CD14-positive monocyte (primary cell): ENCODE measurements at regions of chr21 and their contacts with region 1.

Region 1: DNA sequence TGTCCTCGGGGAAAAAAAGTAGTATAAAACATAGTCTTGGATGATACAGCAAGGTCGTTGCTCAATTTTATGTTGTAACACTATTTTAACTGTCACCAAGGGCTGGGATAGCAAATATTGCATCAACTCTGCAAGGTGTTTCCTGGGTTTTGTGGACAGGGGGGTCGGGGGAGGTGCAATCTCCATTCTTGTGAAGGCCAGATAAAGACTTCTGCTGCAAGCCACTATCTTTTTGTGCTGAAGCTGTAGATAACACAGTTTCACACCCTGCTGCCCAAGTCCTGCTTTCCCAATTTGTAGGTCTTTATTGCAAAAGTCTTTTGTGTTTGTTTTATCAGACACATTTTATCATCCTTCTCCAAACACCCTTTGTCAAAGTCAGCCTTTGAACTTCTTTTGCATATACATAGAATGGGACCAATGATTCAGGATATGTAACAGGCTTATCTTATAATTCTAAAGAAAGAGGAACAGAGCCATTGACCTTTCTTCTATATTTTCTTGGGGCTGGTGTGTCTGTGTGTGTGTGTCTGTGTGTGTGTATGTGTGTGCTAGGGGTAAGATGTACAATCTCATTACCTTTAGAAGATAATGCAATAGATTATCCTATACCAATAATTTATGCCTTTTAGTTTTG is 140.6 kb downstream of the RUNX1 start:
- DNase-seq: peak; percentile 72 to 92 (median 86)
- H3K4me3 ChIP-seq: peak overlapping the region in 2 of 3 experiments; percentile 51 to 72
- H3K4me3 Mint-ChIP-seq: peak overlapping the region; percentile 60 to 86
- H3K27ac ChIP-seq: peak overlapping the region; percentile 70 to 88
- H3K27ac Mint-ChIP-seq: peak overlapping the region; percentile 90 to 97 (median 92)
- H3K4me1 ChIP-seq: peaks cover 76 to 93% of the 10 kb centered on the region in 2 donors
- H3K4me1 Mint-ChIP-seq: peaks cover 92% of the 10 kb centered on the region
- H3K27me3 ChIP-seq: no peaks in the 10 kb centered on the region
- H3K27me3 Mint-ChIP-seq: no peaks in the 10 kb centered on the region
- CTCF ChIP-seq: no peak

Region 2: GRCh38 chr21:34679051-34679450 is 229.5 kb before region 1 on chr21:
- intact Hi-C with region 1: no loop called
- DNase-seq: peak; percentile 49 to 75 (median 52)
- H3K4me3 ChIP-seq: no peak overlapping the region
- H3K4me3 Mint-ChIP-seq: no peak overlapping the region
- H3K27ac ChIP-seq: peak overlapping the region in 1 of 2 donors; percentile 36
- H3K27ac Mint-ChIP-seq: peak overlapping the region in 3 of 7 donors; percentile 27 to 62 (median 48)
- H3K4me1 ChIP-seq: peaks cover 4 to 10% of the 10 kb centered on the region in 2 donors
- H3K4me1 Mint-ChIP-seq: peaks cover 8% of the 10 kb centered on the region
- H3K27me3 ChIP-seq: peaks cover 3 to 16% of the 10 kb centered on the region in 2 donors
- H3K27me3 Mint-ChIP-seq: peaks cover 7 to 24% (median 23%) of the 10 kb centered on the region in 3 donors
- CTCF ChIP-seq: no peak

Region 3: GRCh38 chr21:34967509-34968289 is 59.2 kb after region 1 on chr21:
- intact Hi-C with region 1: loop called in 1 of 2 experiments (anchors 2 kb)
- DNase-seq: peak; percentile 71 to 89 (median 87)
- H3K4me3 ChIP-seq: peak overlapping the region in 1 of 3 experiments; percentile 16
- H3K4me3 Mint-ChIP-seq: peak overlapping the region in 1 of 2 donors; percentile 21
- H3K27ac ChIP-seq: peak overlapping the region; percentile 42 to 70
- H3K27ac Mint-ChIP-seq: peak overlapping the region; percentile 81 to 97 (median 93)
- H3K4me1 ChIP-seq: peaks cover 66 to 67% of the 10 kb centered on the region in 2 donors
- H3K4me1 Mint-ChIP-seq: peaks cover 85% of the 10 kb centered on the region
- H3K27me3 ChIP-seq: no peaks in the 10 kb centered on the region
- H3K27me3 Mint-ChIP-seq: no peaks in the 10 kb centered on the region
- CTCF ChIP-seq: no peak

Region 4: DNA sequence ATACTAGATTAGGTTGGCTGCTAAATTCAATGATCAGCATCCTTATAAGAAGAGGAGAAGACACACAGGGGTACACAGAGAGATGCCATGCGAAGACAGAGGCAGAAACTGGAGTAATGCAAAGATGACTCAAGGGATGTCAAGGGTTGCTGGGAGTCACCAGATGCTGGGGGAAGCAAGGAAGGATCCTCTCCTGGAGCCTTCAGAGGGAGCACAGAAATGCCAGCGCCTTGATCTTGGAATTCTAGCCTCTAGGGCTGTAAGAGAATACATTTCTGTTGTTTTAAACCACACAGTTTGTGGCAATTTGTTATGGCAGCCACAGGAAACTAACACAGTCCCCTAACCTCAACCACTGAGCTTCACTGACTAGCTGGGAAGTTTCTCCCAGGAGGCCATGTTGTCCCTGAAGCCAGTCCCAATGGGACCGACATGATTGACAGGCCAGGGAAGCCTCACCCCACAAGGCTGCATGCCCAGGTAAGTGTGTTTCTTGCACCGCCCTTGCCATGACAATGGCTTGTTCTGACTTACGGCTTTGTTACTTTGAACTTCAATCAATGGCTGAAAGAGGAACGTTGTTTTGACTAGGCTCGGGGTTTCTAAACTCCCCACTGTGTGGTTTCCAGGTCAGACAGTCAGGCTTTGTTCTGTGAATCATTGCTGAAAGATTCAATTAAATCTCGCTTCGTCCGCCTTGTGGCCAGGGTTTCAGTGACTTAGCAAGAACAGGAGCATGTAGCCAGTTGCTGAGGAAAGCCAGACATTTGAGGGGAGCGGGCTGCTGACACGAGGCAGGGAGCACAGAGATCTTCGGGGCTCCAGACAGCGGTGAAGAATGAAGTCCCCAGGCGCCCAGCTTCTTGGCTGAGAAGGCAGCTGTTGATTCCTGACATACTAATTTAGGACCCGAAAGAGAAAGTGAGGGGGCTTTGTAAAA is 78.3 kb after region 1 on chr21:
- intact Hi-C with region 1: loop called in 1 of 2 experiments (anchors 5 kb)
- DNase-seq: peak in 2 of 3 donors; percentile 41 to 51
- H3K4me3 ChIP-seq: no peak overlapping the region
- H3K4me3 Mint-ChIP-seq: no peak overlapping the region
- H3K27ac ChIP-seq: peak overlapping the region in 1 of 2 donors; percentile 2
- H3K27ac Mint-ChIP-seq: peak overlapping the region in 6 of 7 donors; percentile 10 to 76 (median 34)
- H3K4me1 ChIP-seq: peaks cover 27 to 41% of the 10 kb centered on the region in 2 donors
- H3K4me1 Mint-ChIP-seq: peaks cover 77% of the 10 kb centered on the region
- H3K27me3 ChIP-seq: no peaks in the 10 kb centered on the region
- H3K27me3 Mint-ChIP-seq: peaks cover 0 to 3% (median 0%) of the 10 kb centered on the region in 3 donors
- CTCF ChIP-seq: no peak